ENCODE measurements at regions of chr11 and their contacts with region 1.

Region 1: GRCh38 chr11:13826505-13827278 is 135.8 kb upstream of the SPON1 start:
- DNase-seq: no peak
- H3K4me3 ChIP-seq: no peak overlapping the region
- H3K27ac ChIP-seq: no peak overlapping the region
- H3K4me1 ChIP-seq: no peaks in the 10 kb centered on the region
- H3K27me3 ChIP-seq: no peaks in the 10 kb centered on the region
- CTCF ChIP-seq: no peak
- POLR2A ChIP-seq: no peak

Region 2: GRCh38 chr11:13008625-13009475 is 817.8 kb before region 1 on chr11 and contains the start of gene RASSF10:
- intact Hi-C with region 1: loop called (anchors 10 kb)
- DNase-seq: peak; percentile 89 to 92
- H3K4me3 ChIP-seq: peak within 1 kb of the TSS; percentile 29 to 78 (median 65)
- H3K27ac ChIP-seq: peak within 1 kb of the TSS; percentile 78 to 88
- H3K4me1 ChIP-seq: no peaks in the 10 kb centered on the region
- H3K27me3 ChIP-seq: no peaks in the 10 kb centered on the region
- CTCF ChIP-seq: no peak
- POLR2A ChIP-seq: peak; percentile 77
- total RNA-seq, gene RASSF10: 0.16 to 9.7 (median 3.9) TPM

Region 3: GRCh38 chr11:14218728-14219127 is 392.0 kb after region 1 on chr11:
- intact Hi-C with region 1: no loop called
- DNase-seq: no peak
- H3K4me3 ChIP-seq: no peak overlapping the region
- H3K27ac ChIP-seq: no peak overlapping the region
- H3K4me1 ChIP-seq: no peaks in the 10 kb centered on the region
- H3K27me3 ChIP-seq: no peaks in the 10 kb centered on the region
- CTCF ChIP-seq: no peak
- POLR2A ChIP-seq: no peak

Measured in breast epithelium (tissue), 4 donors.